Activated CD4-positive, alpha-beta T cell treated with anti-CD3 and anti-CD28 coated beads for 36 hours (primary cell): ENCODE measurements at regions of chrX and their contacts with region 1.

Region 1: GRCh38 chrX:148080593-148080992 is 99.5 kb downstream of the FMR1NB start:
- DNase-seq: no peak
- ATAC-seq: no peak
- H3K4me3 Mint-ChIP-seq: no peak overlapping the region
- H3K27ac Mint-ChIP-seq: no peak overlapping the region
- H3K4me1 Mint-ChIP-seq: no peaks in the 10 kb centered on the region
- H3K27me3 Mint-ChIP-seq: no peaks in the 10 kb centered on the region

Region 2: DNA sequence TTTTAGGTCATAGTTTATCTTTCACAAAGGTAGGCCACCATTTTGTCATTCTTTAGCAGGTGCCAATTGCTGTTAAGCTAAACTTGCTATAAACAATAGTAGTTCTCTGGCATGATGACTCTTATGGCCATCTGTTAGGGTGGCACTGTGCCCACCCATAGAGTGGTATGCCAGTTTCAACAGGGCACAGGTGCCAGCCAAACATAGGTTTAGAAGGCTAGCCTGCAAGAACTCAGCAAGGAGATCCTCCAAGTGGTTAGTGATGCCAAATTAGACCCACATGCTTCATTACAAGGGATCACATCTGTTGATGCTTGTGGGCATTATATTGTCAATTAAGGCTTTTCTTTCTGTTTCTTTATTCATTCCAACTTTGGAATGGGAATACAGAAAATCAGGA is 105.0 kb after region 1 on chrX:
- CTCF ChIA-PET with region 1: no interaction called
- POLR2A ChIA-PET with region 1: no interaction called
- intact Hi-C with region 1: no loop called
- DNase-seq: no peak
- ATAC-seq: no peak
- H3K4me3 Mint-ChIP-seq: no peak overlapping the region
- H3K27ac Mint-ChIP-seq: no peak overlapping the region
- H3K4me1 Mint-ChIP-seq: no peaks in the 10 kb centered on the region
- H3K27me3 Mint-ChIP-seq: no peaks in the 10 kb centered on the region

Region 3: GRCh38 chrX:149494844-149495565 is 1414.4 kb after region 1 on chrX:
- CTCF ChIA-PET with region 1: no interaction called
- POLR2A ChIA-PET with region 1: interaction called, 11 read pairs
- intact Hi-C with region 1: no loop called
- DNase-seq: no peak
- ATAC-seq: no peak
- H3K4me3 Mint-ChIP-seq: no peak overlapping the region
- H3K27ac Mint-ChIP-seq: no peak overlapping the region
- H3K4me1 Mint-ChIP-seq: peaks cover 7% of the 10 kb centered on the region
- H3K27me3 Mint-ChIP-seq: no peaks in the 10 kb centered on the region